ENCODE measurements at regions of chr7 and their contacts with region 1.

Region 1: DNA sequence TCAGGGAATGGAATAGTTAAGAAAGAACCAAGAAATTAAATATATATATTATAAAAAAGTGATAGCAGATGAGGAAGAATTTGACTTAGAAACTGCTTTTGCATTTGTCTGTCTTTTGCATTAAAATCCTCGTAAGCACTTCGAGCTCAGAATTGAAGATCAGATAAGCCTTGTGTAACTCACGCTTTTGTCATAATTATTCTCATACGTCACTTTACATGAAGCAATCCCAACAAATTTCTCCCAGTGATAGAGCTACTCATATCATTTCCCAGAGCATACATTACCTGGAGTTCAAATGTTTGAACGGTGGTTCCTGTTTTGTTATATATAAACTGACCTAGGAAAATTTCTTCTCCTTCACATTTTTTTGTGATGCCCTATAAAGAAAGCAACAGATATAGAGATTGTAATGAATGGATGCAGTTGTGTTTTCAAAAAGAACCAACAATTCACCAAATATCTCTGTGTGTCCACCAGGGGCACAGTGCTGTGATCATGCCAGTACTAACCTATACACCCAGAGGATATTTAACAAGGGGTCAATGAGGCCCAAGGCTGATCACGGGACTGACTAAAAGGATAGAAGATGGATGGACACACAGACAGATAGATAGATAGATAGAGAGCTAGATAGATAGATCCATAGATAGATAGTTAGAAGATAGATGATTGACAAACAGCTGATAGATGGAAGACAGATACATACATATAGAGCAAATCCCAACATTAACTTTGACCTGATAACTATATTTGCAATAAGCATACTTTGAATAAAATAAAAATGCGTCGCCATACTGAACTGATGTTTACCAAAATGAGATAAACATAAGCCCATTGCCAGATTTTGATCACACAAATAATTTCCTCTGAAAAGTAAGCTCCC is 9.3 kb upstream of the HUS1 start:
- DNase-seq: no peak
- ATAC-seq: no peak
- H3K4me3 ChIP-seq: no peak overlapping the region
- H3K27ac ChIP-seq: no peak overlapping the region
- H3K4me1 ChIP-seq: peaks cover 10% of the 10 kb centered on the region
- H3K27me3 ChIP-seq: no peaks in the 10 kb centered on the region
- CTCF ChIP-seq: peak in 1 of 7 experiments; percentile 11
- POLR2A ChIP-seq: no peak

Region 2: DNA sequence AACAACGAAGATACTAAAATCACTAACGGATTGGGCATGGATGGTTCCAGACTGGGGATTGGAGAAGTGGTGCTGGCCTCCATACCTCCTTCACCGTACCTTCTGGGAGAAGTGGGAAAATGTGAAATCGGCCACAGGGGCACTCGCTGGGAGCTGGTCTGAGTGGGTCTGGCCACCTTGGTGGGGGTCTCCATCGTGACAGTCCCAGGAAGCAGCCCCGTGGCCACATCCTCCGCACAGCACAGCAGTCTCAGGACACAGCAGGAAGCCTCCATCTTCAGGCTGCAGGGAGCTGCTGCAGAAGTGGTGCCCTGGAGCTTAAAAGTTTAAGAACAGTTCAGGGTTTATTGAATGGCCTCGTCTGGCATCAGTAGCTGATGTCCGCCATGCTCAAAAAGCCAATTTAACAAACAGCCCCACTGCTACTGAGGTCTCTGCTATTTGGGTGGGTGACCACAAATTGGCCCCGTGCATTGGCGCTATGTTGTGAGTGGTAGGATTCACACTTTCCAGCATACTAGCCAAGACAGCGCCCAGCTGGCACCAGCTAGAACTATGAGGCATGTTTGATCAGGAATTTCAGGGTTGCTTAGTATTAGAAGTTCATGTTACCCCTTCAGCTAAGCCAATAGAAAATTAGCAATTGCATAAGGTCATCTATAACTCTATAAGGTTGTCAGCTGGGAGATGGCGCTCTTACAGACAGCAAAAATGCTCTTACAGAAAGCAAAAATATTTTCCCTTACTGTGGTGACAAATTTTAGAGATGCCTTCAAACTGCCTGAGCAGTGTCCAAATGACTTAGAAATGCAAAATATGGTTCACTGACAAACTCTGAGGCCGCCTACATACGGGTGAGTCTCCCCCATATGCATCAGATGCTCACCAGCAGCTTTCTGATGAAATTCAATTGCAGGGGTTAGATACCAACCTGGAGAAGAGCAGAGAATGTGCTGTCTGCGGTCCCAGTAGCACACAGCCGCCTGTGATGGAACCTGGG is 57.4 kb before region 1 on chr7:
- intact Hi-C with region 1: no loop called
- DNase-seq: no peak
- ATAC-seq: no peak
- H3K4me3 ChIP-seq: no peak overlapping the region
- H3K27ac ChIP-seq: no peak overlapping the region
- H3K4me1 ChIP-seq: no peaks in the 10 kb centered on the region
- H3K27me3 ChIP-seq: no peaks in the 10 kb centered on the region
- CTCF ChIP-seq: no peak
- POLR2A ChIP-seq: no peak

Region 3: GRCh38 chr7:48035301-48035966 is 46.7 kb after region 1 on chr7 and contains the start of gene C7orf57:
- intact Hi-C with region 1: no loop called
- DNase-seq: peak; percentile 91 to 93 (median 92)
- ATAC-seq: peak; percentile 100
- H3K4me3 ChIP-seq: peak within 1 kb of the TSS; percentile 39 to 43
- H3K27ac ChIP-seq: no peak within 1 kb of the TSS
- H3K4me1 ChIP-seq: peaks cover 10% of the 10 kb centered on the region
- H3K27me3 ChIP-seq: peaks cover 0 to 9% of the 10 kb centered on the region in 2 donors
- CTCF ChIP-seq: peak in 2 of 7 experiments; percentile 28 to 38
- POLR2A ChIP-seq: no peak
- total RNA-seq, gene C7orf57: 0.26 TPM in 1 of 2 donors, not detected in the other

Region 4: DNA sequence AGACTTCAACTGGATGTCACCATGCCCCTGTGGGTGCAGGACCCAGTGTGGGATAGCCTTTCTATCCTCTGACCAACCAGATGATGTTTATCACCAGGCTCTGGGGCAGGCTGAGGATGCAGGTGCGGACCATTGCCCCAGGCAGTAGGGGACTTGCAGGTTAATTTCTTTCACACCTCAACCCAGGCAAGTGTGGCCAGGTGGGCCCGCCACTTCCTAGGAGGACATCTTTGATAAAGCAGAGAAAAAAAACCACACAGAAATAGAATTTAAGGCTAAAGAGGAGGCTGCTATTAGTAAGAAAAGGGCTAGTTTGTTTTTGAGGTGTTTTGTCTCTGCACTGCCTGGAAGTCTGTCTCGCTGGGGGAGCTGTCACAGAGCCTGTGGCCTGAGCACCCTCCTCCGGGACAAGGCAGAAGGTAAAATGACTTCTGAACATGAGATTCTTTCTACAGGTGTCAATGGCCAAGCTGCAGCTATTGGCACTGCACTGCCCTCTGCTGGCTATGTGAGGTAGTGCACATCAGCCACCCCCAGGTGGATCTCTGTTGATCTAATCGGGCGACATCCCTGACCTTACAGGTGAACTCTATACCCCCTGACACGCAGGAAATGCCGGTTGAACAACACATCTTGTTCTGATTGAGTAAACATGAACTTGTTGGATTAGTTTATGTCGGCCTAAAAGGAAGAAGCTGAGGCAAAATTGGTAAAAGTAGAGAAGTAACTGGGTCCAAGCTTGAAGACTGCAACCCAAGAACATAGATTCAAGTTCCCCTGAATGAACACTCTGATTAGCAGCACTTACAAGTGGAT is 121.3 kb after region 1 on chr7:
- intact Hi-C with region 1: loop called (anchors 5 kb)
- DNase-seq: peak; percentile 82 to 89 (median 84)
- ATAC-seq: peak; percentile 89
- H3K4me3 ChIP-seq: no peak overlapping the region
- H3K27ac ChIP-seq: no peak overlapping the region
- H3K4me1 ChIP-seq: peaks cover 7% of the 10 kb centered on the region
- H3K27me3 ChIP-seq: no peaks in the 10 kb centered on the region
- CTCF ChIP-seq: peak; percentile 94 to 98 (median 96)
- POLR2A ChIP-seq: no peak